Activated CD4-positive, alpha-beta memory T cell treated with anti-CD3 and anti-CD28 coated beads for 36 hours (primary cell): ENCODE measurements at regions of chrX and their contacts with region 1.

Region 1: DNA sequence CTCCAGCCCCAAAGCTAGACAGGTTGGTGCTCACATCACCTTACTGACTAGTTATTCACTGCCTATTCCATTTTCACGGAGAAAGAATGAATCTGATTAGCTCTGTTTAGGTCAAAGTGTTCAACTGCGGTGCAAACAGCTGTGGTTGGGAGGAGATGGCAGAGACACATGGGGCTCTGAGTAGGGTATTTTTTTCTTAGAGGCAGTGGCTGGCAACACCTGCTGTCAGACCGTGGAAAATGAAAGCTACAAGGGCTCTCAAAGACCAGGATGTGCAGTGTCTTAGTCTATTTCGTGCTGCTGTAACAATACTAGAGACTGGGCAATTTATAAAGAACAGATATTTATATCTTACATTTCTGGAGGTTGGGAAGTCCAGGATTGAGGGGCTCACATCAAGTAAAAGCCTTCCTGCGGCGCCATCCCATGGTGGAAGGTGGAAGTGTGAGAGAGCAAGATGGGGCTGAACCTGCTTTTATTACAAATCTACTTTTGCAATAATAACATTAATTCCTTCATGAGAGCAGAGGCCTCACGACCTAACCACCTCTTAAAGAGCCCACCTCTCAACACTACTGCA is 10.6 kb downstream of the NYX start:
- DNase-seq: peak; percentile 34
- H3K4me3 Mint-ChIP-seq: no peak overlapping the region
- H3K27ac Mint-ChIP-seq: no peak overlapping the region
- H3K4me1 Mint-ChIP-seq: peaks cover 6% of the 10 kb centered on the region
- H3K27me3 Mint-ChIP-seq: no peaks in the 10 kb centered on the region

Region 2: GRCh38 chrX:41275661-41276609 is 181.8 kb before region 1 on chrX:
- CTCF ChIA-PET with region 1: no interaction called
- POLR2A ChIA-PET with region 1: no interaction called
- intact Hi-C with region 1: loop called (anchors 2 kb)
- DNase-seq: peak; percentile 68
- H3K4me3 Mint-ChIP-seq: peak overlapping the region; percentile 75
- H3K27ac Mint-ChIP-seq: peak overlapping the region; percentile 33
- H3K4me1 Mint-ChIP-seq: no peaks in the 10 kb centered on the region
- H3K27me3 Mint-ChIP-seq: no peaks in the 10 kb centered on the region